ENCODE measurements at regions of chr13 and their contacts with region 1.

Region 1: GRCh38 chr13:30114571-30115256 is 192.6 kb downstream of the KATNAL1 start:
- DNase-seq: peak; percentile 92 to 96 (median 92)
- ATAC-seq: peak; percentile 87
- H3K4me3 ChIP-seq: peak overlapping the region in 1 of 2 donors; percentile 26
- H3K27ac ChIP-seq: peak overlapping the region; percentile 75 to 91 (median 82)
- H3K4me1 ChIP-seq: peaks cover 36% of the 10 kb centered on the region
- H3K27me3 ChIP-seq: no peaks in the 10 kb centered on the region
- CTCF ChIP-seq: peak; percentile 87 to 97 (median 93)
- POLR2A ChIP-seq: peak; percentile 33 to 61 (median 50)

Region 2: GRCh38 chr13:29513397-29514322 is 601.1 kb before region 1 on chr13:
- intact Hi-C with region 1: loop called (anchors 10 kb)
- DNase-seq: peak in 1 of 4 donors; percentile 5
- ATAC-seq: no peak
- H3K4me3 ChIP-seq: no peak overlapping the region
- H3K27ac ChIP-seq: no peak overlapping the region
- H3K4me1 ChIP-seq: no peaks in the 10 kb centered on the region
- H3K27me3 ChIP-seq: no peaks in the 10 kb centered on the region
- CTCF ChIP-seq: no peak
- POLR2A ChIP-seq: no peak

Measured in body of pancreas (tissue), 4 donors.